WTC11 (cell line): ENCODE measurements at regions of chr9 and their contacts with region 1.

Region 1: GRCh38 chr9:121686930-121687541 is 35.6 kb downstream of the DAB2IP start:
- DNase-seq: peak; percentile 89
- ATAC-seq: peak; percentile 80
- H3K4me3 Mint-ChIP-seq: no peak overlapping the region
- H3K27ac Mint-ChIP-seq: no peak overlapping the region
- H3K4me1 Mint-ChIP-seq: peaks cover 21% of the 10 kb centered on the region
- H3K27me3 Mint-ChIP-seq: no peaks in the 10 kb centered on the region
- CTCF ChIP-seq: peak; percentile 68; the same call in 1 of the 2 replicates

Region 2: GRCh38 chr9:121463026-121463807 is 223.8 kb before region 1 on chr9:
- CTCF ChIA-PET with region 1: no interaction called
- POLR2A ChIA-PET with region 1: no interaction called
- DNase-seq: peak; percentile 82
- ATAC-seq: peak; percentile 87
- H3K4me3 Mint-ChIP-seq: no peak overlapping the region
- H3K27ac Mint-ChIP-seq: no peak overlapping the region
- H3K4me1 Mint-ChIP-seq: peaks cover 10% of the 10 kb centered on the region
- H3K27me3 Mint-ChIP-seq: no peaks in the 10 kb centered on the region; the same call in 1 of the 2 replicates
- CTCF ChIP-seq: peak; percentile 67

Region 3: GRCh38 chr9:121604242-121604641 is 82.8 kb before region 1 on chr9:
- CTCF ChIA-PET with region 1: interaction called, 18 read pairs
- POLR2A ChIA-PET with region 1: no interaction called
- DNase-seq: no peak
- ATAC-seq: no peak
- H3K4me3 Mint-ChIP-seq: no peak overlapping the region
- H3K27ac Mint-ChIP-seq: peak overlapping the region; percentile 93; the same call in 1 of the 2 replicates
- H3K4me1 Mint-ChIP-seq: peaks cover 40% of the 10 kb centered on the region
- H3K27me3 Mint-ChIP-seq: peaks cover 14% of the 10 kb centered on the region
- CTCF ChIP-seq: no peak

Region 4: GRCh38 chr9:121634329-121635261 is 52.4 kb before region 1 on chr9:
- CTCF ChIA-PET with region 1: interaction called, 115 read pairs
- POLR2A ChIA-PET with region 1: no interaction called
- DNase-seq: peak; percentile 70
- ATAC-seq: peak; percentile 88
- H3K4me3 Mint-ChIP-seq: no peak overlapping the region
- H3K27ac Mint-ChIP-seq: peak overlapping the region; percentile 64
- H3K4me1 Mint-ChIP-seq: peaks cover 48% of the 10 kb centered on the region
- H3K27me3 Mint-ChIP-seq: no peaks in the 10 kb centered on the region
- CTCF ChIP-seq: peak; percentile 37

Region 5: DNA sequence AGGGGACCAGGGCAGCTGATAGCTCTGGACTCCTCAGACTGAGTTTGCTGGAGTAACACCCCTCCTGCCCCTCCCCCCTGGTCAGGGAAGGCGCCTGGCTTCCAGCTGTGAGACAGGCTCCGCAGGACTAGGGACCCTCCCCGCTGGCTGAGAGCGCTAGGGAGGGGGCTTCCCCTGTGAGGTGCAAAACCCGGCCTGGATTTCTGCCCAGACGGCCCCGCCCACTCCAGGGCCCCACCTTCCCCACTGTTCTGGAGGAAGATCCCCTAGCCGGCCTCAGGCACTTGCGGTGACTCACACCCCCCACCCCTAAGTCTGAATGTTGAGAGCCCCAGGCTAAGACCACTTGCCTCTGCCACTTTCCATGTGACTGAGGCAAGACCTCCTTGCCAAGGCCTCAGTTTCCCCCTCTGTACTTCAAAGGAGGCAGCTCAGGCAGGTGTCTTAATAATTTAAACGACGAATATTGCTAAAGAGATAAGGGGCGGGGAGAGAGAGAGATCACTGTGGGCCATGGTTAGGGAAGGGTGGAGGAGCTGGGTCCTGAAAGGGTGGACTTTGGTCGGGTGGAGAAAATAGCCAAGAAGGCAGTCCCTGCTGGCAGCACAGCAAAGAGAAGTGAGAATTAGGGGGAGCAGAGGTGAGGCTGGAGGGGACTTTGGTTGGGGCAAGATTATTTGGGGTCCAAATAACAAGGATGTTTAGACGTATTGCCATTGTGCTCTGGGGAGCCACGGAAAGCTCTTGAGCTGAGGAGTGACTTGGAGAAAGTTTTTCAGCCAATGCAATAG is 36.6 kb before region 1 on chr9:
- CTCF ChIA-PET with region 1: interaction called, 13 read pairs
- POLR2A ChIA-PET with region 1: no interaction called
- DNase-seq: peak; percentile 89
- ATAC-seq: peak; percentile 62
- H3K4me3 Mint-ChIP-seq: peak overlapping the region; percentile 79
- H3K27ac Mint-ChIP-seq: peak overlapping the region; percentile 78; the same call in 1 of the 2 replicates
- H3K4me1 Mint-ChIP-seq: peaks cover 73% of the 10 kb centered on the region
- H3K27me3 Mint-ChIP-seq: peaks cover 9% of the 10 kb centered on the region; the same call in 1 of the 2 replicates
- CTCF ChIP-seq: no peak

Region 6: DNA sequence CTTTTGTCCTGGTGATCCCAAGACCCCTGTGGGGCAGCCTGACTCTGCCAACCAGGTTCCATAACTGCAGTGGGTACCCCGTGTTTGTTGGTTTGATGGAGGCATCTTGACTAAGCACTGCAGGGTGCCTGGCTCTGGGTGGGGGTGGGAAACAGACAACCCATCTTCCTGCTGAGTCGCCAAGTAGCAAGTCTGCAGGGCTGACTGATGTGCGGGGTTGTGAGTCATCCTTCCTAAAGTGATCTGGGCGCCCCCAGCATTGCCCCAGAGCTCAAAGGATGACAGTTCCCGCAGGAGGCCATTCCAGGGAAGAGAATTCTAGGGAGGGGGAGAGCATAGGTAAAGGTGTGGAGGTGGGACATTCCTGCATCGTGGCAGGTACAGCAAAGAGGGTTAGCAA is 12.1 kb before region 1 on chr9:
- CTCF ChIA-PET with region 1: interaction called, 30 read pairs
- POLR2A ChIA-PET with region 1: no interaction called
- DNase-seq: no peak
- ATAC-seq: peak; percentile 74
- H3K4me3 Mint-ChIP-seq: no peak overlapping the region
- H3K27ac Mint-ChIP-seq: no peak overlapping the region
- H3K4me1 Mint-ChIP-seq: peaks cover 14% of the 10 kb centered on the region
- H3K27me3 Mint-ChIP-seq: no peaks in the 10 kb centered on the region
- CTCF ChIP-seq: no peak

Region 7: DNA sequence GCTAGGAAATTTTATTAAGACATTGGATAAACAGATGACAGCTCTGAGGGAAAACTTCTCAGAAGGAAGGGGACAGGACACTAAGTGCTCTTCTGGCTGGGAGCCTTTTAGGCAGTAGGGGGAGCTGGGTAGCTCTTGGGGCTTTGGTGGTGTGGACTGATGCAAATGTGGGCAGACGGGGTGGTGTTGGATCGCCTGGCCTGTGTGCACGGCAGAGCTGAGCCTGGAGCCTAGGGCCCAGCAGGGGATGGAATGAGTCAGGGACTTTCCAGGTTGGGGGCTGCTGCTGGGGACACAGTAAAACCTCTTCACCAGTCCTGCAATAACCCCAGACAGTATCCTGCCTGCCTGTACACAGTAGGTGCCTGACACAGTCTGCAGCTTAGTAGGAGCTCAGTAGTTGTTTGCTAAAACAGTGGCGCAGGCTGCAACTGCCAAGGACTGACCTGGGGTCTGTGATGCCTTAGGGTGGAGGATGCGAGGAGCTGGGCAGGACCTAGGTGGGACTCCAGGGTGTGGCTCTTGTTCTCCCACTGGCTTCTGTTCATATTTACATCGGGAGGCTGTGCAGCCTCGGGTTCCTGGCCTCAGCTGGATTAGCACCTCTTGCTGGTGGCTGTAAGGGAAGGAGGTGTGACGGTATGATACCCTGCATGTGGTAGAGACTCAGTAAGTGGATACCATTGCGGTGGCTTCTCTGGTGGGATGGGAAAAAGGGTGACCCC is 48.2 kb after region 1 on chr9:
- CTCF ChIA-PET with region 1: interaction called, 18 read pairs
- POLR2A ChIA-PET with region 1: no interaction called
- DNase-seq: peak; percentile 76
- ATAC-seq: peak; percentile 81
- H3K4me3 Mint-ChIP-seq: peak overlapping the region; percentile 85
- H3K27ac Mint-ChIP-seq: peak overlapping the region; percentile 86
- H3K4me1 Mint-ChIP-seq: peaks cover 66% of the 10 kb centered on the region
- H3K27me3 Mint-ChIP-seq: peaks cover 3% of the 10 kb centered on the region; the same call in 1 of the 2 replicates
- CTCF ChIP-seq: no peak; the same call in 1 of the 2 replicates

Region 8: GRCh38 chr9:121989010-121989409 is 302.0 kb after region 1 on chr9:
- CTCF ChIA-PET with region 1: interaction called, 12 read pairs
- POLR2A ChIA-PET with region 1: no interaction called
- DNase-seq: peak; percentile 76
- ATAC-seq: peak; percentile 94
- H3K4me3 Mint-ChIP-seq: no peak overlapping the region
- H3K27ac Mint-ChIP-seq: no peak overlapping the region
- H3K4me1 Mint-ChIP-seq: no peaks in the 10 kb centered on the region
- H3K27me3 Mint-ChIP-seq: peaks cover 17% of the 10 kb centered on the region
- CTCF ChIP-seq: no peak